AG04450 (cell line): ENCODE measurements at regions of chr3 and their contacts with region 1.

Region 1: DNA sequence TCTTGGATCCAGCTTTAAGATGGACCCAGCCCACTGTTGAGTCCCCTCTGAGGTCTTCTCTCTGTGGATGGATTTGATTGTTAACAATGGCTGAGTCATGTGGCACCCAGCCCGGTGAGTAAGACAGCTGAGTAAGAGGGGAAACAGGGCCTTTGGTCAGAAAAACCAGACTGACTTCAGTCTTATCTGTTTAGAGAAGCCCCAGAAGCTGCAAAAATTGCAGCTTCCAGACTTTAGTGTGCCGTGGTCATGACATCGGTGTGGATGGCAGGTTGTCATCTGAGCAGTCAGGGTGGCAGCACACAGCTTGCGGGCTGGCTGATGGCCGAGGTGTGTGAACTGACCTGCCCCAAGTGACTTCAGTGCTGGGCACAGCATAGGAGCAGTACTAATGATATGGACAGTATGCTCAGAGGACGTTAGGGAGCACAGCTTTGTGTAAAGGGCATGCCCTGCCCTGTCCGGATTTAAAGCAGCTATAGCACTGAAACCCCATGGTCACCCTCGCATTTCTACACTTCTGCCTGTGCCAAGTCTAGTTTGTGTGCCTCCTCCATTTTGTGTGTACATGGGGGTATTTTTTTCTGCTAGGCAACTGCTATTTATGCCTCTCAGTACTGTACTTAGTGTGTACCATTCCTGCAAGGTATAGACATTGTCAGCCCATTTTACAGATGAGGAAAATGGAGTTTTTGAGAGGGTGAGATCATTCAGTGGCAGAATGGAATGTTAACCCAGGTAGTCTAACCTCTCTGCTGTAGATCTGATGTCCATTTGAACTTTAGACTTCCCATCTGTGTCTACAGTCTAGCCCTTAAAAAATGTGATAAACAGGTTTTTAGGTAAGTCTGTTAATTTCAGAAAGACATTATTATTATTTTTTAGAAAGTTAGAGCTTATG is 44.4 kb downstream of the FLNB start:
- DNase-seq: peak; percentile 86
- H3K4me3 ChIP-seq: peak overlapping the region; percentile 47
- H3K27ac ChIP-seq: peak overlapping the region; percentile 92
- H3K27me3 ChIP-seq: no peaks in the 10 kb centered on the region
- CTCF ChIP-seq: no peak

Region 2: DNA sequence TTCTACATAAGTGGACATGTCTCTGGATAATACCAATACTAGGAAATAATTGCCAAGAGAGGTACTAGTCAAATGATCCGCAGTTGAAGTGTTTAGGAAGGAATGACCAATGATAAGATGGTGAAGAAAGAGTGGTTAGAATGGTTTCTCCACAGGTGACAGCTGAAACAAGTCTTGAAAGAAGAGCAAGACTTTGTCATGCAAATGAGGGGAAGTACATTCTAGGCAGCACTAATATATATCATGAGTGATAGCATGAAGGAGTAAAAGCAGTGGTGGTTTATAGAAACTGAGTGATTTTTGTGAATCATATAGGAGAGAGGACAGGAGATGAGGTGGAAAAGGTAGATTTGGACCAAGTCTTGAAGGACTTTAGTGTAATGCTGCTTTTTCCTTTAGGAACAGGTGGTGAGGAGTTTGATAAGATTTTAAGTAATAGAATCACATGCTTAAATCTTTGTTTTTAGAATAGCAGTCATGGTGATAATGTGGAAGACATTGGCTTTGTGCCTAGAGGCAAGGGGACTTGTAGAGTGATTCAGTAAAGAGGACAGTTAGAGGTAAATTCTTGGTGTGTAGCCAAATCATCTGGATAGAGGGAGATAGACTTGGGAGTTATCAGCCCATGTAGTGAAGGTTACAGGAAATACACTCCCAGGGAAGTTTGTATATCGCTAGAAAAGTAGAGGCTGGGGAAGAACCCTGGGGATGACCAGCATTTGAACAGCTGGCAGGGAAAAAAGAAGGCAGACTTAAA is 264.6 kb before region 1 on chr3:
- CTCF ChIA-PET with region 1: no interaction called
- POLR2A ChIA-PET with region 1: no interaction called
- DNase-seq: no peak
- H3K4me3 ChIP-seq: no peak overlapping the region
- H3K27ac ChIP-seq: no peak overlapping the region
- H3K27me3 ChIP-seq: no peaks in the 10 kb centered on the region
- CTCF ChIP-seq: no peak

Region 3: GRCh38 chr3:57983734-57984518 is 68.7 kb before region 1 on chr3:
- CTCF ChIA-PET with region 1: no interaction called
- POLR2A ChIA-PET with region 1: no interaction called
- DNase-seq: peak; percentile 66
- H3K4me3 ChIP-seq: no peak overlapping the region
- H3K27ac ChIP-seq: peak overlapping the region; percentile 82
- H3K27me3 ChIP-seq: no peaks in the 10 kb centered on the region
- CTCF ChIP-seq: no peak

Region 4: GRCh38 chr3:57998366-57999283 is 54.0 kb before region 1 on chr3:
- CTCF ChIA-PET with region 1: no interaction called
- POLR2A ChIA-PET with region 1: no interaction called
- DNase-seq: no peak
- H3K4me3 ChIP-seq: peak overlapping the region; percentile 22
- H3K27ac ChIP-seq: no peak overlapping the region
- H3K27me3 ChIP-seq: no peaks in the 10 kb centered on the region
- CTCF ChIP-seq: no peak

Region 5: DNA sequence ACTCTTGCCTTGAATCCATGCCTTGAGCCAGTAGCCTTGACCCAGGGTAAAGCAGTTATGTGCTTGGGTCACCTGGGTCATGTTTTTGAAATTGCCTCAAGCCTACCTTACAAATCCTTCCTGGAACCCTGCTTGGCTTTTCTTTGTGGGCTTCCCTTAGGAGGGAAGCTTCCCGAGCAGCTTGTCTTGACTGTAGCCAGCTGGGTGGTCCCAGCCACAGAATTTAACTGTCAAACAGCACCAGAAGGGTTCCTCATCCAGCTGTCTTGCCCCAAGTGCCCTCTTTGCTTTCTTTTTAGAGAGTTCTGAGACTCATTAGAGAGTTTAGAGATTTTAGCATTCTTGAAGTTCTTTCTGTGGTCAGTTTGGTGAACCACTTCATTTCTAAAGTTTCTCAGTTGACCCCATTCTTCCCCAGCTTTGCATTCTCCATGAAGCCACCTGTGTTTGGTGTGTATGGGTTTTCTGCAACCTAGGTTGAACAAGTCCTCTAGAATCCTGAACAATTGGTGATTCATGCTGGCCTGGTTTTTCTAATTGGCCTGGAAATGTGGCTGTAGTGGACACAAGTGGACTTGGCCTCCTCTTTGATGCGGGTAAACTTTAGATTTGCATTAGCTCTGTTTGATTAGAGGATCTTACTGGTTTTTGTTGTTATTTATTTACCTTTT is 10.8 kb before region 1 on chr3:
- CTCF ChIA-PET with region 1: no interaction called
- POLR2A ChIA-PET with region 1: interaction called, 13 read pairs
- DNase-seq: peak; percentile 71
- H3K4me3 ChIP-seq: no peak overlapping the region
- H3K27ac ChIP-seq: peak overlapping the region; percentile 79
- H3K27me3 ChIP-seq: no peaks in the 10 kb centered on the region
- CTCF ChIP-seq: no peak